GM10248 (cell line): ENCODE measurements at regions of chr10 and their contacts with region 1.

Region 1: DNA sequence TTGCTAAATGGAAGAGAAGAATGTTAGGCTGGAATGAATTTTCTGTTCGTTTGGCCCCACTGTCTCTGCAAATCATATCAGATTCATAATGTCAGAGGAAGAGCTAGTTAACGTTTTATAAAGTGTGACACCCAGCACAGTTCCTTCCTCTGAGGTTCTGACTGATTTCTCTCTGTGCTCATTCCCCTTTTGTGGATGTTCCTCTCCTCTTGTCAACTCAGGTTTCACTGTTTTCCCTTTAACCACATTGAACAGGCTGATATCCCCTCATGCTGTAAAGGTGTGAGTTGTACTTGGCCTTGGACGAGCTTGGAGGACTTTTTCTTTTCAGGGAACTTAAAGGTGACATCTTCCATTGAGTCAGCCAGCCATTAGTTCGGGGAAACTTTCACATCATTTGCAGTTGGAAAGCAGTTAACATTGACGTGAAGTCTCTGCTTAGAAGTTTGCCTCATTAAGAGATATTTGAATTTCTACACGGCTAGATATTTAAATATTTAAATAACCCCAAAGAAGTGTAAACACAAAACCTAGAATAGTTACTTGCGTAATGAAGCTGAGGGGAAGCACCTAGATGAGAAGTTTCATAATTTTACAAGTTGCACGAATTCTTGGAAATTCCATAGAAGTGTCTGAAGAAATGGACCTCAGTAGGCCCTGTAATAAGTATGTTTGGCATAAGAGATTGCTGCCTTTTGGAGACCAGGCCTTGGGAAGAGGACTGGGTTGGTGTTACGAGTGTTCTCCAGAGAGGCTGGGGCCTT is 101.5 kb upstream of the EGR2 start:
- DNase-seq: no peak
- CTCF ChIP-seq: no peak

Region 2: GRCh38 chr10:62851442-62851841 is 66.2 kb before region 1 on chr10:
- CTCF ChIA-PET with region 1: interaction called, 3 read pairs
- POLR2A ChIA-PET with region 1: interaction called, 13 read pairs
- DNase-seq: no peak
- CTCF ChIP-seq: peak; percentile 23